CD4-positive, alpha-beta T cell (primary cell): ENCODE measurements at regions of chr11 and their contacts with region 1.

Region 1: DNA sequence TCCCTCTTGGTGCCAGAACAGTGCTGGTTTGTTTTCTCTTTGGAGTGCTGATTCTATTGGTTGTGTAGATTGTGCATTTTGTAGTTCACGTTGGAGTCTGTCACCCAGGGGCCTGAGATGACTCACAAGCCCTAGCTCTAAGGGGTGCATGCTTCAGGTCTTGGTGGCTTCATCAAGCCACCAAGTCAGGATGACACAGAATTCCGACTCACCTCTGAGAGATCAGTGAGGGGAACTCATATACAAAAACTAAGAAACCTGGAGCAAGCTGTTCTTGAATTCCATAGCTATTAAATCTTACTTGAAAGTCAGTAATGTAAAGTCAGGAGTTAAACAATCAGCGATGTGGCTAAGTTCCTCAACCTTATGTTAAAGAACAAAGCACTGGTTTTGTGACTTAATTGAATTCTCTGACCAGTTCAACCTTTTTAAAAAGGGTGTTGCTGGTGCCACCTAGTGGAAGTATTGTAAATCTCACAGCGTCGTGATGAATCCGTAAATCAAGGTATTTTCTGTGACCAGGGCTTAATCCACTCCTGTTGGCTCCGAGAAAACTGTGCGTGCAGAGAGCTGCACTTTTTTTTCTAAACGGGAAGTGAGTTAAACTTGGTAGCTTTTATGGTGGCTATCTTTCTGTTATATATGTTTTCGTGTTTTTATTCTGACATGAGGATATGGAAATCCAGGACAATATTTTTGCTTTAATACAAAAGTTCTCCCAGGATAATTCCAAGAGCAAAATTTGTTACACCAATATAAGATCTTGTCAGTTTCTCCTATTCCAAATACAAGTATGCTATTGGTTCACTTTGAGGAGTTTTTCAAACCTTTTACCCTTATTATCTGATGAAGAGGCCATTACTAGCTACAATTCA is 14.6 kb downstream of the MMP13 start:
- DNase-seq: peak in 8 of 14 experiments; percentile 2 to 61 (median 18)
- ATAC-seq: peak; percentile 49
- H3K4me3 ChIP-seq: no peak overlapping the region
- H3K4me3 Mint-ChIP-seq: no peak overlapping the region
- H3K27ac ChIP-seq: no peak overlapping the region
- H3K27ac Mint-ChIP-seq: no peak overlapping the region
- H3K4me1 ChIP-seq: no peaks in the 10 kb centered on the region
- H3K4me1 Mint-ChIP-seq: peaks cover 5% of the 10 kb centered on the region
- H3K27me3 ChIP-seq: no peaks in the 10 kb centered on the region
- H3K27me3 Mint-ChIP-seq: peaks cover 16% of the 10 kb centered on the region
- CTCF ChIP-seq: peak; percentile 81

Region 2: GRCh38 chr11:102367364-102367763 is 573.6 kb before region 1 on chr11:
- CTCF ChIA-PET with region 1: no interaction called
- POLR2A ChIA-PET with region 1: no interaction called
- intact Hi-C with region 1: loop called in 1 of 2 experiments (anchors 10 kb)
- DNase-seq: peak in 3 of 14 experiments; percentile 56 to 64 (median 60)
- ATAC-seq: peak; percentile 78
- H3K4me3 ChIP-seq: no peak overlapping the region
- H3K4me3 Mint-ChIP-seq: no peak overlapping the region
- H3K27ac ChIP-seq: no peak overlapping the region
- H3K27ac Mint-ChIP-seq: peak overlapping the region; percentile 75
- H3K4me1 ChIP-seq: no peaks in the 10 kb centered on the region
- H3K4me1 Mint-ChIP-seq: peaks cover 34% of the 10 kb centered on the region
- H3K27me3 ChIP-seq: no peaks in the 10 kb centered on the region
- H3K27me3 Mint-ChIP-seq: no peaks in the 10 kb centered on the region
- CTCF ChIP-seq: peak; percentile 59